Right ventricle myocardium superior (tissue), 1 donor: ENCODE measurements at regions of chr3 and their contacts with region 1.

Region 1: GRCh38 chr3:101229681-101230080 is 90.7 kb downstream of the IMPG2 start:
- DNase-seq: no peak
- ATAC-seq: peak; percentile 20

Region 2: DNA sequence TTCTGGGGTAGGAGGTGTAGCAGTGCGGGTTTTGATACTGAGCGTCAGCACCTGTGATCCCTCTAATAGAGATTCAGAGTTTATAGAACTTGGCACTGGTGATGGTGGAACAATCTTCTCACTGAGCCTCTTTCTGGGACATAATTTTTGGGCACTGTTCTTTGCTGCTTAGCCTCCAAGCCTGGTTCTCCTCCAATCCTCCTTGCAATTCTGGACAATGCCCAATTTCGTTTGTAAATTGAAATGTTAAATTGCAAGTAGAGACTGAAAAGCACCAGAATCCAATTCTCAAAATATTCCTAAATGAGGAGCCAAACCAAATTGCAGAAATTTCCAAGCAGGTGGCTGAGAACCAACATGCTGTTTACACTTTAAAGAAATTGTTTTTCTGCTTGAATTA is 86.7 kb before region 1 on chr3:
- intact Hi-C with region 1: no loop called
- DNase-seq: no peak
- ATAC-seq: peak; percentile 67

Region 3: DNA sequence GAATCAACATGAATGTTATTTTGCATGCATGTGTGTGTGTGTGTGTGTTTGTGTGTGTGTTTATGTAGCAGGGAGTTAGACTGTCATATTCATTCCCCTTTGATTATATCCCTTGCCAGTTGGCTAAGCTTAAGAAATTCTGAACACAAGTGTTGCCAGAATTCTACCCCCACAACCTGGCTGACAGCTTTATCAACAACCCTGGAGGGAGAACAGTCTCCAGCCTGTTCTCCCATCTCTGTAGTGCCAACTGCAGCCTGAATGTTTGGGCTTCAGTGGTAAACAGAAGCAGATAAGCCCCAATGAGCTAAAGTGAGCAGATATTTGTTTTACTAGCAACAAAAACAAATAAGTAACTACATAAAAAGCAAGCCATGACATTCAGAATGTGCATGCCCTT is 73.9 kb before region 1 on chr3:
- intact Hi-C with region 1: no loop called
- DNase-seq: no peak
- ATAC-seq: peak; percentile 96

Region 4: DNA sequence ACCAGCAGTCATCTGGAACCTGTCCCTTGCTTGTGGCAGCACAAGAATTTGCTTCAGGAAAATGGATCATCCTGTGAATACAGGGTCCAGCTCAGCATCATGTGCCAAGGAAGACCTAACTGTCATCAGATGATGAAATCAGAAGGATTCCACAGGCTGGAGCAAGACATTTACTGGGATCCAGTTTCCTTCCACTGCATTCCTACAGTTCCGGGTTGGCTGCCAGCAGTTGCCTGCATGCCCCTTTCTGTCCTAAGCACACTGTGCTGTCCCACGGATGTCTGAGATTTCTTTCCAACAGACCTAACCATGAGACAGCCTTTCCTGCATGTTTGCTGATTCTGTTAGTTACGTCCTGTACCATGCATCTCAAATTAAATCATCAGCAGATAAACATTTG is 50.0 kb before region 1 on chr3:
- intact Hi-C with region 1: no loop called
- DNase-seq: no peak
- ATAC-seq: peak; percentile 69

Region 5: DNA sequence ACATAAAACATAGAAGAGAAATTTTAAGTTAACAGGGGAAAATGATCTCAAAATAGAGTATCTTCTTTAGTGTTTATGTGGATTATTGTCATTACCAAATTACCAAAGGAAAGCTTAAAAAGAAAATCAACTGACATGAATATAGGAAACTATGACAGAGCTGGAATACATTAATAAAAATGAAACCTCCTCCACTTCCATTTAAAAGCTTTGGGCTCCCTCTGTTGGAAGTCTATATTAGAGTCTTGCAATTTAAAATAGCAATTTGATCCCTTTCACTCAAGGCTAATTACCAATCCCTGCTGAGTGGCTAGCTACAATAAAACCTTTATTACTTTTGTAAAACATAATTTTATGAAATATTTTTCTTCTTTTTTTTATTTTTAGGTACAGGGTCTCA is 152.1 kb after region 1 on chr3:
- intact Hi-C with region 1: loop called (anchors 10 kb)
- DNase-seq: no peak
- ATAC-seq: peak; percentile 66